ENCODE measurements at regions of chr20 and their contacts with region 1.

Region 1: GRCh38 chr20:2688041-2688591 is 4.5 kb upstream of the EBF4 start:
- DNase-seq: peak; percentile 91
- H3K4me3 Mint-ChIP-seq: no peak overlapping the region
- H3K27ac Mint-ChIP-seq: no peak overlapping the region
- H3K4me1 Mint-ChIP-seq: peaks cover 15% of the 10 kb centered on the region
- H3K27me3 Mint-ChIP-seq: peaks cover 14% of the 10 kb centered on the region

Region 2: DNA sequence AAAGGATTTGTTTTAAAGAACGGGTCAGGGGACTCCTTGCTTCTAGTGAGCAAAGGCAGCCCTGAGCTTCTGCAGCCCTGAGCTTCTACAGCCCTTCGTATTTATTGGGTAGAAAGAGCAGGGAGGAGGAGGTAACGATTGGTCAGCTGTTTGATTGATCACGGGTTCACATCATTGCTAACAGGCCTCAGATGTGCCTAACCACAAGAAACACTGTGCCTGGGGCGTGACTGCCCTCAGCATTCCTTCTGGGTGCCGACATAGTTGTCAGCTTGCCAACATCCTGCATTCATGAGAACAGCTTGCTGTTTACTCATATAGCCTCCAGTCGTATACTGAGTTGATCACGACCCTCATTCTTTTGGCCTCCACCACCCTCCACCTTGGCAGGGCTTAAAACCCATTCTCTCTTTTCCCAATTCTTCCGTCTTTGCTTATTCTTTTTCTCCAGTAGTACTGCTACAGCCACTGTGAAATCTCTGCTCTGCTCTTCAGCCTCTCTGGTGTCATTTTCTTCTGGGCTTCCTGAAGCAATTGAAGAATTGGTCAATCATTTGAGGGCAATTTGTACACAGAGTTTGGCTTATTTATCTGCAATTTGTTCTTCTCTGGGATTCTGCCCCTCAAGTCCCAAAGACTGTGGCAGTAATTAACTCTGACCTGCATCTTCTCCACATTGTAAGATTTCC is 61.1 kb before region 1 on chr20:
- CTCF ChIA-PET with region 1: no interaction called
- intact Hi-C with region 1: no loop called
- DNase-seq: no peak
- H3K4me3 Mint-ChIP-seq: no peak overlapping the region
- H3K27ac Mint-ChIP-seq: no peak overlapping the region
- H3K4me1 Mint-ChIP-seq: no peaks in the 10 kb centered on the region
- H3K27me3 Mint-ChIP-seq: peaks cover 9% of the 10 kb centered on the region

Region 3: DNA sequence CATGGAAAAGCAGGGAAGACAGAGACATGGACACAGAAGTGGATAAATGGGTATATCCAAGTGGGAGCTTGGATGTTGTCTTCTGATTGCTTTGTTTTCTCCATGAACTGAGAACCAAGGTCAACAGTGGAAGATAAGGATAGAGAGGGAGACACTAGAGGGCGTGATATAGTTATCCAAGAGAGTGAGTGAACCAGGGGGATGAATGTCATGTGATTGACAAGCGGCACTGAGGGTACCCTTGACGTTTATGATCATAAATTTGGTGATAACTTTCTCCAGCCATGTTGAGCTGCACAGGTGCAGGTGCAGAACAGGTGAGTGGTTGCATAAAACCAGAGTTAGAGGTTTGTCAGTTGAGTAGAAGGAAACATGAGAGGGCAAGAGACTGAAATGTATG is 25.2 kb after region 1 on chr20:
- CTCF ChIA-PET with region 1: interaction called, 4 read pairs
- intact Hi-C with region 1: loop called (anchors 2 kb)
- DNase-seq: no peak
- H3K4me3 Mint-ChIP-seq: no peak overlapping the region
- H3K27ac Mint-ChIP-seq: no peak overlapping the region
- H3K4me1 Mint-ChIP-seq: no peaks in the 10 kb centered on the region
- H3K27me3 Mint-ChIP-seq: no peaks in the 10 kb centered on the region

Region 4: DNA sequence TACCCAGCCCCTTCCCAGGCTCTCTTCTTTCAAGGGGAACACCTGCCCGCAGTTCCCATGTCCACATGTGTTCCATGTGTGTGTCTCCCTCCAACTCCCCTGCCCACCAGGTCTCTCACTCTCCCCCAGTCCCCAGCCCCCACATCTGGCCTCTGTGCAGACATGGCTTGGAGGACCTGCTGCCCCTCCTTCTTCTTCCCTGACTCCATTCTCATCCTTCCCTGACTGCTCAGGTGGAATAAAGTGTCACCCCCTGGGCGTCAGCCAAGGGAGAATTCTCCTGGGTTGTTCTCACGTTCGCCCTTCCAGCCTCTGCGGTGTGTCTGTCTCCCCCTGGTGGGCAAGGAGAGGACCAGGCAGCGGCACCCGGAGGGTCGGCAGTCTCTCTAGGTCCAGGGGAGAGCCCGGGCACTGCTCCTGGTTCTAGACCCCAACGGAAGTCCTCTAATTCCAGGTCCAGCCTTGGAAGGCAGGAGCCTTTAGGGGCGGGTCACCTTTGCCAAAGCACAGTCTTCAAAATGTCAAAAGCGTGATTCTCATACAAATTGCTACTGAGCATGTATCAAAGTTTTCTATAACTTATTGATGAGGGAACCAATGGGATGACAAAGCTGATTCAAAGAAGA is 54.9 kb after region 1 on chr20:
- CTCF ChIA-PET with region 1: interaction called, 67 read pairs
- intact Hi-C with region 1: loop called (anchors 1 kb)
- DNase-seq: peak; percentile 81
- H3K4me3 Mint-ChIP-seq: no peak overlapping the region
- H3K27ac Mint-ChIP-seq: no peak overlapping the region
- H3K4me1 Mint-ChIP-seq: peaks cover 42% of the 10 kb centered on the region
- H3K27me3 Mint-ChIP-seq: no peaks in the 10 kb centered on the region

Region 5: DNA sequence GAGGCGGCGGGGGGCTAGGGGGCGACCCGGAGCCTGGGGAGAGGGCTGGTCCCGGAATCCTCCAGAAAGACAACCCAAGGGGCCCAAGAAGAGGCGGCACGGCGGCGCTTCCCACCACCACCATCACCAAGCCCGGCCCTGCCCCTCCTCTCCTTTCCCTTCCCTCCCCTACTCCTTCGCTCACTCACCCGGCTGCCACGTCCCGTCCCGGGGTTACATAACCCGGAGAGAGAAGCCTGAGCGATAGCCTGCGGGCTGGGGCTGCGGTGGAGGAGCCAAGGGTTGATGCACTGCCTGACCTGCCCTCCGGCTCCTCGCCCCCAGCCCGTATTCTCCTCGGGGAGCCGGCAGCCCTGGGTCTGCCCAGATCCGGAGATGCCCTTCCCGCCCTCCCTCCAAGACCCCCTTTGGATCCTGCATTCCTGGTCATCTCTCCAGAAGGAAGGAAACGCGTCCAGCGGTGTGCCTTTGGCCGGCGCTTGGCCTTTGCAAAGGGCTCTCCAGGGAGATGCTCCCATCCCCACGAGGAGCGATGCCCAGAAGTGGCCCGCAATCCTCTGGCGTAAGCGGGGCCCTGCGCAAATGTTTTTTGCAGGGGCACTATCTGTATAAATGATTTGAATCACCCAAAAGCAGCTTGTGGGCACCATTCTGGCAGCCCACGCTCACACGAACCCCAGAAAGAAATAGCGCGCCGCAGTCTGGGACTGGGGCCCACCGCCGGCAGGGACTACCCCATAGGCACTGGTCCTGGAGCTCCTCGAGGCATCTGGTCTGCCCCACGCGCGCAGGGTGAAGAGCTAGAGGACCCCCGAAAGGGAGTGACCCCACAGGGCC is 117.0 kb after region 1 on chr20:
- CTCF ChIA-PET with region 1: no interaction called
- intact Hi-C with region 1: no loop called
- DNase-seq: no peak
- H3K4me3 Mint-ChIP-seq: no peak overlapping the region
- H3K27ac Mint-ChIP-seq: no peak overlapping the region
- H3K4me1 Mint-ChIP-seq: peaks cover 10% of the 10 kb centered on the region
- H3K27me3 Mint-ChIP-seq: peaks cover 44% of the 10 kb centered on the region

Region 6: DNA sequence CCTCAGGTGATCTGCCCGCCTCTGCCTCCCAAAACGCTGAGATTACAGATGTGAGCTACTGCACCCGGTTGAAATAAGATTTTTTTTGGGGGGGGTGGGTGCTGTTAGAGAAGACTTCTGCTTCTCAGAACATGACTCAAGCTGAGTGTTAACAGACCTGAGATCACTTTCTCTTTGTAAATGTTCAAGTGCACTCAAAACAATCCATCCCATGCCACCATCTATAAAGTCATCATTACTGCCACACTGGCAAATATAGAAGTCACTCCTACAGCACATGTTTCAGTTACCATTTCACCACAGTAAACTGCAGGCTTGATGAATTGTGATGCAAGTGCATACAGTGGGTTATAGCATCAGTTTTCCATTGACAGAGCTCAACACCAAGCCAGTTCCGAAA is 161.4 kb after region 1 on chr20:
- CTCF ChIA-PET with region 1: interaction called, 3 read pairs
- intact Hi-C with region 1: loop called (anchors 1 kb)
- DNase-seq: no peak
- H3K4me3 Mint-ChIP-seq: no peak overlapping the region
- H3K27ac Mint-ChIP-seq: peak overlapping the region; percentile 18
- H3K4me1 Mint-ChIP-seq: peaks cover 27% of the 10 kb centered on the region
- H3K27me3 Mint-ChIP-seq: no peaks in the 10 kb centered on the region

Measured in activated naive CD4-positive, alpha-beta T cell treated with anti-CD3 and anti-CD28 coated beads for 36 hours (primary cell).